ENCODE measurements at regions of chr4 and their contacts with region 1.

Region 1: DNA sequence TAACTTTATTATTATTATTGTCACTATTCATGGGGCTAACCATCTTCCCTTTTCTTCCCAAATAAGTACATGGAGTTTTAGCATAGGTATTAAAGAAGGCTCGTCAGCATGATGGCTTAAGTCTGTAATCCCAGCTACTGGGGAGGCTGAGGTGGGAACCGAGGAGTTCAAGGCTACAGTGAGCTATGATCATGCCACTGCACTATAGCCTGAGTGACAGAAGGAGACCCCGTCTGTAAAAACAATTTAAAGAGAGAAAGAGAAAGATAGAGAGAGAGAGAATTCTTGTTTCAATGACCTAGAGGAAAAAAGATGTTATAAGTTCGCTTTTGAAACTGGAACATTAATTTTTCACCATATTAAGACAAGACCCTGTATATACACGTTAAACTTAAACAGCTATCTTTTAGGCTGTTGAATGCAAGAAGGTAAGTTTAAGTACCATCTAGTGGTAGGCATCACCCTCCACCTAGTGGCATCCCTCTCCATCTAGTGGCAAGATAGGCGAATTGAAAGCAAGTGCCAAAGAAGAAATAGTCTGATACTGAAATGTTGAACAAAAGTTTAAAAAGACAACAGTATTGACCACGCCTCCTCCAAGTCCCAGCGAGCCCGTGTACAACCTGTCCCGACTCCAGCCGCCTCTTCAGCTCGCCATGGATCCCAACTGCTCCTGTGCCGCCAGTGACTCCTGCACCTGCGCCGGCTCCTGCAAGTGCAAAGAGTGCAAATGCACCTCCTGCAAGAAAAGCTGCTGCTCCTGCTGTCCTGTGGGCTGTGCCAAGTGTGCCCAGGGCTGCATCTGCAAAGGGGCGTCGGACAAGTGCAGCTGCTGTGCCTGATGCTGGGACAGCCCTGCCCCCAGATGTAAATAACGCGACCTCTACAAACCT is 26.0 kb upstream of the YTHDC1 start:
- DNase-seq: peak; percentile 39 to 65 (median 52)
- ATAC-seq: peak; percentile 86
- H3K4me3 ChIP-seq: no peak overlapping the region
- H3K27ac ChIP-seq: no peak overlapping the region
- H3K4me1 ChIP-seq: no peaks in the 10 kb centered on the region
- H3K27me3 ChIP-seq: no peaks in the 10 kb centered on the region
- CTCF ChIP-seq: peak; percentile 68 to 98 (median 93)
- POLR2A ChIP-seq: no peak

Region 2: DNA sequence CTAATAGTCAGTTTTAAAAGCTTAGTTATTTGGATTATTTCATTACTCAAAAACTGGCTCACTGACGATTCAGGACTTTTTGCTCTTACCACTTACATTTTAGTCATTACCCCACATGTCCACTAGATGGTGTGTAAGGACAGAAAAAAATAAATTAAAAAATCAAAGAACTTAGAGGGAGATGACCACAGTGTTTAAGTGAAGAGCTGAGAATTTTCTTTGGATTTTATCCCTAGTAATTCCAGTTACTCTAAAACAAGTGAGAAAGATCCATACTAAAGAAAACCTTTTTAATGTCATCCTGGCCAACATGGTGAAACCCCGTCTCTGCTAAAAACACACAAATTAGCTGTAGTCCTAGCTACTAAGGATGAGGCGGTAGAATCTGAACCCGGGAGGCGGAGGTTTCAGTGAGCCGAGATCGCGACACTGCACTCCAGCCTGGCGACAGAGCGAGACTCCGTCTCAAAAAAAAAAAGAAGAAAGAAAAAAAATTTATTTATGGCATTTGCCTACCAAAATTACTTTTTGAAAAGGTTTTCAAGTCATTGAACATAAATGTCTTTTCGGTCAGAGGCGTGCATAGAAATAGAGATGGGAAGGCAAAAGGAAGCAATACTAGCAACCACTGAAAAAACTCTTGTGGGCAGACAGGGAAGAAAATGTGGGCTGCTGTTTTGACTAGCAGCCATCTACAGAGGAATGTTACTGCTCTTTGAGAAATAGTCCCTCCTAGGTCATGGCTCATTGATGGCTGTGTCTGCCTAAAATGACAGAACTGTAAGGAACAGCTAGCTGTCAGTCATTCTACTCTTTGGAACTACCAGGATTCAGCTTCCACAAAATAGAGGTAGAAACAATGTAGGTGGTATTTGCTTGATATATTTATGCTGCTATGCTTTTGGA is 103.8 kb before region 1 on chr4:
- intact Hi-C with region 1: loop called (anchors 5 kb)
- DNase-seq: no peak
- ATAC-seq: peak; percentile 79
- H3K4me3 ChIP-seq: no peak overlapping the region
- H3K27ac ChIP-seq: no peak overlapping the region
- H3K4me1 ChIP-seq: no peaks in the 10 kb centered on the region
- H3K27me3 ChIP-seq: no peaks in the 10 kb centered on the region
- CTCF ChIP-seq: peak; percentile 44 to 87 (median 83)
- POLR2A ChIP-seq: no peak